ENCODE measurements at regions of chr6 and their contacts with region 1.

Region 1: DNA sequence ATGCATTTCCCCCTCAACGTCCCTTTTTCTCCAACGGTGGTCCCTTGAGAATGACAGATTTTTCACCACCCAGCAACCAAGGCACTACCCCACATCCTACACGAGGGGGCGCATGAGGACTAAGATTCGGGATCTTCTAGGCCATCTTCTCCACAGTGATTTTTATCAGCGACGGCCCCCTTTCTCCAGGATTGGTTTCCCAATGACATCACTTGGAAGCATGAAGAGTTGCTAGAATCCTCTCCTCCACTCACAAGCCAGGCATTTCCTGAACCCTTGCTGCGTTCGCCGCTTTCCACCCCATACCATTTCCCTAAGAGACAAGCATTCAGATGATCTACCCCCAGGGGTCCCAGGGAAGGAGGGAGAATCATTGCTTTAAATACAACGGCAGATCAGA is 252.0 kb downstream of the HIVEP2 start:
- DNase-seq: peak; percentile 32 to 81
- H3K4me3 ChIP-seq: no peak overlapping the region
- H3K4me1 ChIP-seq: no peaks in the 10 kb centered on the region
- H3K27me3 ChIP-seq: 0 out of 2 replicates have a peak, but pooled peaks cover 1% of the 10 kb centered on the region

Region 2: GRCh38 chr6:142537612-142538478 is 155.1 kb before region 1 on chr6:
- in situ Hi-C with region 1: no loop called
- DNase-seq: peak; percentile 11 to 71
- H3K4me3 ChIP-seq: no peak overlapping the region
- H3K4me1 ChIP-seq: no peaks in the 10 kb centered on the region
- H3K27me3 ChIP-seq: no peaks in the 10 kb centered on the region

Region 3: DNA sequence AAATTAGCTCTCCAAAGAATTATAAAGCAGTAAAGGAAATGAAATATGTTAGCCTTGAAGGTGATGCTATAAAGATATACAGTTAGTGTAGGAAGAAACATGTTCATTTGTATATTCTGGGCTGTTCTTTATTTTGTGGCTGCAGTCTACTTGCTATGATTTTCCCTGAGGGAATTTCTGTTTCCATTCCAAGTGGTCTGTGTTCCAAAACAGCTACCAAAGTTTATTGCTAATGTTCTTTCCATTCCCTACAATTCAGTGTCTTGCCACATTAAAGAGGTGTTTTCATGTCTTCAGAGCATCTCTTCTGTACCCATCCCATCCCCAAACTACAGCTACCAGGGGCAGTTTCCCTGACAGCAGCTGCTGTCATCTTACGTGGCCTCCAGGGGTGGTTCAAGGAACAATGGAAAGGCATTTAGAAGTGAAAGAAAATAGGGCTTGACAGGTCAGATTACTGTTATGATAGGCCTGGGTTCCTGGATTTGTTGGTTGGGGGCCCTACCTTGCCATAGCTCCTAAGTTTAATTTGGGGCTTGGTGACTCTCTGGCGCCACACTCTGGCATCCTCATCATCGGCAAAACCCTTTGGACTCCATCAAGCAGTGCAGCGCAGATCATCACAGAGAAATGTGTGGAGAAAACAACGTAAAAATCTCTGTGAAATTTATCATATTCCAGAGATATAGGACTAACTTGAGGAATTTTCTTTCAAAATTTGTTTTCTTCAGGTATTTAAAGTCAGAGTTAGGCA is 333.9 kb after region 1 on chr6:
- in situ Hi-C with region 1: loop called (anchors 25 kb)
- DNase-seq: peak in 1 of 2 experiments; percentile 51
- H3K4me3 ChIP-seq: no peak overlapping the region
- H3K4me1 ChIP-seq: no peaks in the 10 kb centered on the region
- H3K27me3 ChIP-seq: no peaks in the 10 kb centered on the region

Region 4: DNA sequence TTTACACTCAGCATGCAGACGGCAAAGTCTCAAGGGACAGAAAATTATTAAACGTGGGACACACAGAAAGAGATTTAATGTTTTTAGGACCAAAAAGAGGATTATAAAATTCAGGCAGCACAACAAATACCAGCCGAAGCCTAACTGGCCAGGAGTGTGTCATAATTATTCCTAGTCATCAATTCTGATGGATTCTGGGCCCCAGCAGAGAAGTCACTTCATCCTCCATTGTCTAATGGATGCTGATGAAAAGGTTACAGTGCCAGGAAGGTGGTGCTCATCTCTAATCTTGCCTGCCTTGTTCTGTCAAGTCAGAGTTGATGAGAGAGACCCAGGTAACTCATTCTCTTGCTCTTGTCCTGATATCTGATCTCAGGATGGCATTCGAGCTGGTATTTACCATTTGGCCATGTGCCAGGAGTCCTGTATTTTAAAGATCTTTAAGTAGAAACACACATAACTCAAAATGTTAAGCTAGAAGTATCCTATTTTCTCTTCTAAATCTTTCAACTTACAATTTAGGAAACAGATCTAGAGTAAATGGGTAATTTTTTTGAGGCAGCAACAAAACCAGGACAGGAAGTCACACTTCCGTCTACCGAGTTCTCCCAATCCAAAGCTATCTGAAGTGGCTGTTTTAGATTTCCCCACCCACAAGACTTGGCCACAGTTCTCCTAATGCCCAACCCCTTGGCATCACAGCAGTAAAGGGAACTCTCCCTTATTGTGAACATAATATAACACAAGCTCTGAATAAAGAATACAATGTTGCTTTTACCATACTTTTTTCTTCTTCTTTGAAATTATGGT is 707.5 kb after region 1 on chr6:
- in situ Hi-C with region 1: loop called (anchors 25 kb)
- DNase-seq: no peak
- H3K4me3 ChIP-seq: no peak overlapping the region
- H3K4me1 ChIP-seq: peaks cover 12% of the 10 kb centered on the region
- H3K27me3 ChIP-seq: no peaks in the 10 kb centered on the region

Measured in HAP-1 (cell line).